HepG2 (cell line): ENCODE measurements at regions of chr11 and their contacts with region 1.

Region 1: DNA sequence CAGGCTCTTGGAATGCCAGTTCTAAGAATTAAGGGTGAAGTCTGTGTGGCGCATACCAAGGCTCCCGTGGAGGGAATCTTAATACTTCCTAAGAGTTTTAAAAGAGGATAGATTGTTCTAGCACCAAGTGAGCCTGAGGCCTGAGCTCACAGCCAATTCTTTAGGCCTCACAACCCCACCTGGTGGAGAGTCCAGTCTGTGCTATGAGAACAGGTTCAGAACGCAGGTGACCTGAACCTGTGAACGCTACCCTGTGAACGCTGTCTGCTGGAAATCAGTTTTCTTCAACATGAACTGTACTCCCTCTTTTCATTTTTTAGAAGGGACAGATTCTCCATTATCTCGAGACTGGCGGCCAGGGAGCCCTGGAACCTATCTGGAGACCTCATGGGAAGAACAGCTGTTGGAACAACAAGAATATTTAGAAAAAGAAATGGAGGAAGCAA is 43.2 kb upstream of the DLAT start:
- DNase-seq: peak; percentile 70
- ATAC-seq: peak; percentile 86
- H3K4me3 ChIP-seq: no peak overlapping the region; a peak in 1 of 6 replicates
- H3K27ac ChIP-seq: peak overlapping the region; percentile 78
- H3K4me1 ChIP-seq: peaks cover 40% of the 10 kb centered on the region
- H3K27me3 ChIP-seq: no peaks in the 10 kb centered on the region
- CTCF ChIP-seq: peak; percentile 86
- EP300 ChIP-seq: no peak
- POLR2A ChIP-seq: no peak
- RAD21 ChIP-seq: peak; percentile 66

Region 2: GRCh38 chr11:111870886-111871692 is 111.0 kb before region 1 on chr11 and contains the start of gene ALG9:
- CTCF ChIA-PET with region 1: no interaction called
- POLR2A ChIA-PET with region 1: interaction called, 16 read pairs
- in situ Hi-C with region 1: loop called (anchors 5 kb)
- intact Hi-C with region 1: no loop called
- DNase-seq: peak; percentile 71
- ATAC-seq: peak; percentile 95
- H3K4me3 ChIP-seq: peak within 1 kb of the TSS; percentile 94 to 98 (median 95)
- H3K27ac ChIP-seq: peak within 1 kb of the TSS; percentile 92
- H3K4me1 ChIP-seq: peaks cover 24% of the 10 kb centered on the region
- H3K27me3 ChIP-seq: no peaks in the 10 kb centered on the region
- CTCF ChIP-seq: no peak
- EP300 ChIP-seq: no peak
- POLR2A ChIP-seq: peak; percentile 57 to 62
- RAD21 ChIP-seq: no peak
- total RNA-seq, gene ALG9: 24.4 and 39.4 TPM in 2 replicates

Region 3: DNA sequence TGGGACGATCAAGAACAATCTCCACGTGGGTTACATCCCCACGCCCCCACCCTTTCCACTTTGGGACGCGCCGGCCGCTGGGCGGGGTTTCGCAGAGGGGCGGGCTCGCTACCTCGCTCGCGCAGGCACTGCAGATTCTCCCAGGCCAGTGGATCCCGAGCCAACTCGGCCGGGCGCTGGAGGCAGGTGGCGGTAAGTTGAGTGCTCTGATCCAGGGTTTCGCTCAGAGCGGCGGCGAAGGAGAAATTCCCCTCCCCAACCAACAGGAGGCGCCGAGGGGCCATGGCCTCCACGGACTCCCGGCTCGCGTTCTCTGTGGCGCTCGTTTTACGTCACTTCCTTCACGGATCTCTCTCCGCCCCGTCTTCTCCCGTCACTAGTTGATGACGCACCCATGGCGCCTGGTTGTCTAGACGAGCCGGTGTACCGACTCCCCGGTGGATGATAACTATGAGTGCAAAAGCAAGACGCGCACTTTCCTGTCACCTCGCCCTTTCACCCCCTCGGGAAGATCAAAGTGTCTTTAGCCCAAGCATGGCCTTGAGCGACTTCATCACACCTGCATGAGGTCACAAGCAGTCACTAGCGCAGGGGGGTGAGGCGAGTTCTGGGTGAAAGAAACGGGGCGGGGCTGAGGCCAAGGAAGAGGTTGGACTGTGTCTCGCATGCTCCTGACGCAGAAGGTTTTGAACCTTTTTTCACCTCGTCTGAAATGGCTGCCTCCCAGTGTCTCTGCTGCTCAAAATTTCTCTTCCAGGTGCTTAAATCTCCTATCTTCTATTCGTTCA is 103.0 kb before region 1 on chr11 and contains the starts of genes CFAP68 and FDXACB1:
- CTCF ChIA-PET with region 1: interaction called, 7 read pairs
- POLR2A ChIA-PET with region 1: interaction called, 4 read pairs
- in situ Hi-C with region 1: loop called (anchors 5 kb)
- intact Hi-C with region 1: loop called (anchors 1 kb)
- DNase-seq: peak; percentile 97
- ATAC-seq: peak; percentile 96
- H3K4me3 ChIP-seq: peak within 1 kb of the TSS; percentile 78 to 83 (median 81)
- H3K27ac ChIP-seq: peak within 1 kb of the TSS; percentile 95
- H3K4me1 ChIP-seq: peaks cover 11% of the 10 kb centered on the region
- H3K27me3 ChIP-seq: no peaks in the 10 kb centered on the region; a peak in 1 of 5 replicates
- CTCF ChIP-seq: peak; percentile 99
- EP300 ChIP-seq: peak; percentile 68 to 75; a peak in 2 of 4 replicates
- POLR2A ChIP-seq: peak; percentile 32 to 69; a peak in 3 of 4 replicates
- RAD21 ChIP-seq: peak; percentile 96
- total RNA-seq, gene CFAP68: 22.2 and 23.9 TPM in 2 replicates
- total RNA-seq, gene FDXACB1: 3.4 and 5.5 TPM in 2 replicates

Region 4: GRCh38 chr11:111926505-111927391 is 55.3 kb before region 1 on chr11:
- CTCF ChIA-PET with region 1: interaction called, 10 read pairs
- POLR2A ChIA-PET with region 1: interaction called, 18 read pairs
- in situ Hi-C with region 1: no loop called
- intact Hi-C with region 1: loop called (anchors 1 kb)
- DNase-seq: peak; percentile 93
- ATAC-seq: peak; percentile 93
- H3K4me3 ChIP-seq: peak overlapping the region; percentile 32 to 60 (median 47); a peak in 5 of 6 replicates
- H3K27ac ChIP-seq: peak overlapping the region; percentile 92
- H3K4me1 ChIP-seq: peaks cover 71% of the 10 kb centered on the region
- H3K27me3 ChIP-seq: no peaks in the 10 kb centered on the region
- CTCF ChIP-seq: no peak
- EP300 ChIP-seq: peak in 1 of 2 experiments; percentile 50; a peak in 2 of 4 replicates
- POLR2A ChIP-seq: peak; percentile 67 to 84
- RAD21 ChIP-seq: no peak

Region 5: GRCh38 chr11:111932611-111932950 is 49.5 kb before region 1 on chr11:
- CTCF ChIA-PET with region 1: interaction called, 10 read pairs
- POLR2A ChIA-PET with region 1: interaction called, 18 read pairs
- in situ Hi-C with region 1: loop called (anchors 5 kb)
- intact Hi-C with region 1: loop called (anchors 1 kb)
- DNase-seq: no peak
- ATAC-seq: no peak
- H3K4me3 ChIP-seq: no peak overlapping the region
- H3K27ac ChIP-seq: no peak overlapping the region
- H3K4me1 ChIP-seq: peaks cover 52% of the 10 kb centered on the region
- H3K27me3 ChIP-seq: no peaks in the 10 kb centered on the region
- CTCF ChIP-seq: no peak
- EP300 ChIP-seq: no peak
- POLR2A ChIP-seq: no peak
- RAD21 ChIP-seq: no peak

Region 6: GRCh38 chr11:111938687-111939160 is 43.3 kb before region 1 on chr11:
- CTCF ChIA-PET with region 1: no interaction called
- POLR2A ChIA-PET with region 1: interaction called, 17 read pairs
- in situ Hi-C with region 1: loop called (anchors 5 kb)
- intact Hi-C with region 1: no loop called
- DNase-seq: peak; percentile 76
- ATAC-seq: peak; percentile 41
- H3K4me3 ChIP-seq: peak overlapping the region in 2 of 3 experiments; percentile 72 to 84; a peak in 3 of 6 replicates
- H3K27ac ChIP-seq: peak overlapping the region; percentile 90
- H3K4me1 ChIP-seq: peaks cover 74% of the 10 kb centered on the region
- H3K27me3 ChIP-seq: no peaks in the 10 kb centered on the region
- CTCF ChIP-seq: no peak
- EP300 ChIP-seq: peak in 1 of 2 experiments; percentile 67; a peak in 1 of 4 replicates
- POLR2A ChIP-seq: 0 out of 4 replicates have a peak, but pooled peaks of 1 of the 2 experiments have one; percentile 16
- RAD21 ChIP-seq: no peak

Region 7: DNA sequence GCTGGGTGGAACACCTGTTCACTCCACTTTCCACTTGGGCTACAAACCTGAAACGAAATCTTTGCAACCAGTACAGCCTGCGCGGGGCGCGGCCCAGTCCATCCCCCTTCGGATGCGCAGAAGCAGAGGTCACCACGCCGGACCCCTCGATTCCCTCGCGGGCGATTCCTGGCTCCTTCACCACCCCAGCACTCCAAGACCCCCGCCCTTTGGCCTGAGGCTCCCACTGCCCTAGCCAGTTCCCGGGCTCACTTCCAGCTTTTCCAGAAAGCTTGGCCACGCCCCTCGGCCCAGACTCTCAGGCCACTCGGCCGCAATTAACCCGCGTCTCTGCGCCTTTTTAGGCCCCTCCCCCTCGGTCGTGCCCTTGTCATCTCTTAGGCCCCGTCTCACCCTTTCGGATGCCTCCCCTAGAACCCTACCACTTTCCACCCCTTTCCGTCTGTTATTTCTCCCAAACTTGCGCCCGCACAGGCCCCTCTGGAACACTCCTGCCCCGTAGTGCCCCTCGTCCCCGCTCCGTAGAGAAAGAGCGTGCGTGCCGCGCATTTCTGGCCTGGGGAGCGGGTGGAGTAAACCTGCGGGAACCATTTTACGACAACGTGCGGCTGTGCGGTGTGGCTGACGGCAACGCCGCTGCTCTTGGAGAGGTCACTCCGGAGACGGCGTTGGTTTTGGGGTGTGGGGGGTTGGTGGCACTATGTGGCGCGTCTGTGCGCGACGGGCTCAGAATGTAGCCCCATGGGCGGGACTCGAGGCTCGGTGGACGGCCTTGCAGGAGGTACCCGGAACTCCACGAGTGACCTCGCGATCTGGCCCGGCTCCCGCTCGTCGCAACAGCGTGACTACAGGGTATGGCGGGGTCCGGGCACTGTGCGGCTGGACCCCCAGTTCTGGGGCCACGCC is 43.0 kb after region 1 on chr11 and contains the start of gene DLAT:
- CTCF ChIA-PET with region 1: no interaction called
- POLR2A ChIA-PET with region 1: interaction called, 4 read pairs
- in situ Hi-C with region 1: no loop called
- intact Hi-C with region 1: loop called (anchors 2 kb)
- DNase-seq: peak; percentile 85
- ATAC-seq: peak; percentile 88
- H3K4me3 ChIP-seq: peak within 1 kb of the TSS; percentile 82 to 90 (median 87)
- H3K27ac ChIP-seq: peak within 1 kb of the TSS; percentile 90
- H3K4me1 ChIP-seq: peaks cover 17% of the 10 kb centered on the region
- H3K27me3 ChIP-seq: no peaks in the 10 kb centered on the region; a peak in 2 of 5 replicates
- CTCF ChIP-seq: 0 out of 2 replicates have a peak, but pooled peaks have one; percentile 13
- EP300 ChIP-seq: no peak
- POLR2A ChIP-seq: peak; percentile 57 to 59
- RAD21 ChIP-seq: no peak; the same call in 1 of the 2 replicates
- total RNA-seq, gene DLAT: 62.2 and 73.2 TPM in 2 replicates

Region 8: DNA sequence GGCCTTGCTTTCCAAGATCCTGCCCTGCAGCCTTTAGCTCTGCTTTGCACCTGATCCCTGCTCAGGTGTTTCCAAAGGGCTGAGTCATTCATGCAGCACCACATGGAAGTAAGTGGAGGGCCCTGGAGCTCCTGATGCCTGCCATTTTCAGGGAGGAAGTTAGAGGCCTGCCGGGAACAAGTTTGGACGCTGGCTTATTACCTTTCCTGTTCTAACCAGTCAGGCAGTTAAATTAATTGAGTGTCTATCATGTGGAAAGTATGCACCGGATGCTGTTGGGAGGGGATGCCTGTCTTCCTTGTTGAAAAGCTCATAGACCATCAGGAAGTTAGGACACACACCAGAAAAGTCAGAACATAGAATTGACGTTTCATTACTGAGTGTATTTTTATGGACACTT is 352.3 kb after region 1 on chr11:
- CTCF ChIA-PET with region 1: no interaction called
- POLR2A ChIA-PET with region 1: no interaction called
- in situ Hi-C with region 1: no loop called
- intact Hi-C with region 1: no loop called
- DNase-seq: no peak
- ATAC-seq: no peak
- H3K4me3 ChIP-seq: no peak overlapping the region
- H3K27ac ChIP-seq: no peak overlapping the region
- H3K4me1 ChIP-seq: no peaks in the 10 kb centered on the region
- H3K27me3 ChIP-seq: no peaks in the 10 kb centered on the region; a peak in 1 of 5 replicates
- CTCF ChIP-seq: no peak
- EP300 ChIP-seq: no peak
- POLR2A ChIP-seq: no peak
- RAD21 ChIP-seq: no peak